ENCODE measurements at regions of chr7 and their contacts with region 1.

Region 1: DNA sequence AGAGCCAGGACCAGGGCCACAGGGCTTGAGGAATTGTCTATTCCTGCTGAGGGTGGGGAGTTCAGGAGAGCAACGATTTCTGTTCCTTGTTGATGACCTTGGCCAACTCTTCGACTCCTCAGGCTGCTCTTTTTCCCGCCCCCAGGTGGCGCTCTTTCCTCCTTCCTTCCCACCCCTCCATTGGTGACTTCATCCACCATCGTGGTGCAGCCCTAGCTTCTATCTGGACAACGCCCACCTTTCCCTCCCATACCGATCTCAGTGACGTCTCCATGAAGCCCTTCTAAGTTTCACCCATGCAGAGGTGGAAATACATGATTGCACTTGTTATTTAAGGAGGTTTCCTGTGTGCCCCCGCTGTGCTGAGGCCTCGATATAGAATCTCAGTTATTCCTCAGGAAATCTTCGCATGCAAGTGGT is 22.1 kb upstream of the CARD11 start:
- DNase-seq: peak; percentile 58
- ATAC-seq: peak; percentile 40
- H3K4me3 Mint-ChIP-seq: peak overlapping the region; percentile 68
- H3K27ac Mint-ChIP-seq: peak overlapping the region; percentile 61
- H3K4me1 Mint-ChIP-seq: peaks cover 67% of the 10 kb centered on the region
- H3K27me3 Mint-ChIP-seq: no peaks in the 10 kb centered on the region
- CTCF ChIP-seq: no peak

Region 2: DNA sequence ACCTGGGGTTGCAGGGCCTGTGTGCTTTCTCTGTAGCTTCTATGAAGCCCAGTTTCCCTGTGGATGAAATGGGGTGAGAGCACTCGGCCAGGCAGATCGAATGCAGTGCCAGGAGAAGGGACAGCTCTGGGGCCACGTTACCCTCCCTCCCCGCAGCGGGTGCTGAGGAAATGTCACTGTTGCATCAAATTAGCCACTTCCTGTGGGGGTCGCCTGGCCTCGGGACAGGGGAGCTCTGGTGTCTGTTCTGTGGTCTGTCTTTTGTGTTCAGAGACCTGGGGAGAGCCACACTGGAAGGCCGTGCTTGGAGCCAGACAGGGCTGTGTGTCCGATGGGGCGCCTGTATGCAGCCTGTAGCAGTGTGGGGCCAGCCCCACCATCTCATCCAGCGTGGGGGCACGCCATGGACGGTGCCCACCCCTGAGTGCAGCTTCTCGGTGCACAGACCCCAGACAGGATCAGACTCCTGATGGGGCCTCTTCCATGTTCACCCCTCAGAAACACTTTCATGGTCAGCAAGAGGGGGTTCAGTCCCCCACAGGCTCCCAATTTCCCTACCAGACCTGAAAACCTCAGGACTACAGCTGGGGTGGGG is 420.4 kb before region 1 on chr7:
- CTCF ChIA-PET with region 1: no interaction called
- POLR2A ChIA-PET with region 1: no interaction called
- intact Hi-C with region 1: no loop called
- DNase-seq: no peak
- ATAC-seq: peak; percentile 39
- H3K4me3 Mint-ChIP-seq: peak overlapping the region; percentile 79
- H3K27ac Mint-ChIP-seq: peak overlapping the region; percentile 76
- H3K4me1 Mint-ChIP-seq: peaks cover 44% of the 10 kb centered on the region
- H3K27me3 Mint-ChIP-seq: no peaks in the 10 kb centered on the region
- CTCF ChIP-seq: no peak

Region 3: GRCh38 chr7:2757904-2758672 is 307.6 kb before region 1 on chr7:
- CTCF ChIA-PET with region 1: no interaction called
- POLR2A ChIA-PET with region 1: no interaction called
- intact Hi-C with region 1: loop called (anchors 10 kb)
- DNase-seq: peak; percentile 24
- ATAC-seq: peak; percentile 82
- H3K4me3 Mint-ChIP-seq: peak overlapping the region; percentile 65
- H3K27ac Mint-ChIP-seq: peak overlapping the region; percentile 89
- H3K4me1 Mint-ChIP-seq: peaks cover 45% of the 10 kb centered on the region
- H3K27me3 Mint-ChIP-seq: no peaks in the 10 kb centered on the region
- CTCF ChIP-seq: no peak

Region 4: GRCh38 chr7:2886900-2887299 is 178.8 kb before region 1 on chr7:
- CTCF ChIA-PET with region 1: no interaction called
- POLR2A ChIA-PET with region 1: interaction called, 5 read pairs
- intact Hi-C with region 1: loop called (anchors 1 kb)
- DNase-seq: no peak
- ATAC-seq: peak; percentile 88
- H3K4me3 Mint-ChIP-seq: no peak overlapping the region
- H3K27ac Mint-ChIP-seq: no peak overlapping the region
- H3K4me1 Mint-ChIP-seq: peaks cover 7% of the 10 kb centered on the region
- H3K27me3 Mint-ChIP-seq: no peaks in the 10 kb centered on the region
- CTCF ChIP-seq: no peak

Region 5: GRCh38 chr7:2956526-2957368 is 109.0 kb before region 1 on chr7:
- CTCF ChIA-PET with region 1: no interaction called
- POLR2A ChIA-PET with region 1: no interaction called
- intact Hi-C with region 1: no loop called
- DNase-seq: no peak
- ATAC-seq: peak; percentile 39
- H3K4me3 Mint-ChIP-seq: no peak overlapping the region
- H3K27ac Mint-ChIP-seq: peak overlapping the region; percentile 50
- H3K4me1 Mint-ChIP-seq: peaks cover 42% of the 10 kb centered on the region
- H3K27me3 Mint-ChIP-seq: no peaks in the 10 kb centered on the region
- CTCF ChIP-seq: no peak

Region 6: GRCh38 chr7:3082831-3083230 is 17.1 kb after region 1 on chr7:
- CTCF ChIA-PET with region 1: interaction called, 5 read pairs
- POLR2A ChIA-PET with region 1: interaction called, 3 read pairs
- intact Hi-C with region 1: loop called (anchors 1 kb)
- DNase-seq: no peak
- ATAC-seq: no peak
- H3K4me3 Mint-ChIP-seq: no peak overlapping the region
- H3K27ac Mint-ChIP-seq: no peak overlapping the region
- H3K4me1 Mint-ChIP-seq: peaks cover 23% of the 10 kb centered on the region
- H3K27me3 Mint-ChIP-seq: no peaks in the 10 kb centered on the region
- CTCF ChIP-seq: no peak

Region 7: GRCh38 chr7:3092468-3092867 is 26.7 kb after region 1 on chr7:
- CTCF ChIA-PET with region 1: interaction called, 38 read pairs
- POLR2A ChIA-PET with region 1: interaction called, 18 read pairs
- intact Hi-C with region 1: loop called (anchors 1 kb)
- DNase-seq: peak; percentile 54
- ATAC-seq: peak; percentile 84
- H3K4me3 Mint-ChIP-seq: peak overlapping the region; percentile 15
- H3K27ac Mint-ChIP-seq: peak overlapping the region; percentile 83
- H3K4me1 Mint-ChIP-seq: peaks cover 52% of the 10 kb centered on the region
- H3K27me3 Mint-ChIP-seq: no peaks in the 10 kb centered on the region
- CTCF ChIP-seq: no peak

Region 8: GRCh38 chr7:3134715-3135114 is 69.0 kb after region 1 on chr7:
- CTCF ChIA-PET with region 1: no interaction called
- POLR2A ChIA-PET with region 1: interaction called, 16 read pairs
- intact Hi-C with region 1: no loop called
- DNase-seq: no peak
- ATAC-seq: no peak
- H3K4me3 Mint-ChIP-seq: no peak overlapping the region
- H3K27ac Mint-ChIP-seq: no peak overlapping the region
- H3K4me1 Mint-ChIP-seq: no peaks in the 10 kb centered on the region
- H3K27me3 Mint-ChIP-seq: peaks cover 5% of the 10 kb centered on the region
- CTCF ChIP-seq: no peak

Region 9: GRCh38 chr7:3154912-3155494 is 89.3 kb after region 1 on chr7:
- CTCF ChIA-PET with region 1: interaction called, 41 read pairs
- POLR2A ChIA-PET with region 1: interaction called, 3 read pairs
- intact Hi-C with region 1: loop called (anchors 1 kb)
- DNase-seq: no peak
- ATAC-seq: peak; percentile 84
- H3K4me3 Mint-ChIP-seq: no peak overlapping the region
- H3K27ac Mint-ChIP-seq: no peak overlapping the region
- H3K4me1 Mint-ChIP-seq: peaks cover 36% of the 10 kb centered on the region
- H3K27me3 Mint-ChIP-seq: peaks cover 2% of the 10 kb centered on the region
- CTCF ChIP-seq: peak; percentile 47